ENCODE measurements at regions of chr17 and their contacts with region 1.

Region 1: DNA sequence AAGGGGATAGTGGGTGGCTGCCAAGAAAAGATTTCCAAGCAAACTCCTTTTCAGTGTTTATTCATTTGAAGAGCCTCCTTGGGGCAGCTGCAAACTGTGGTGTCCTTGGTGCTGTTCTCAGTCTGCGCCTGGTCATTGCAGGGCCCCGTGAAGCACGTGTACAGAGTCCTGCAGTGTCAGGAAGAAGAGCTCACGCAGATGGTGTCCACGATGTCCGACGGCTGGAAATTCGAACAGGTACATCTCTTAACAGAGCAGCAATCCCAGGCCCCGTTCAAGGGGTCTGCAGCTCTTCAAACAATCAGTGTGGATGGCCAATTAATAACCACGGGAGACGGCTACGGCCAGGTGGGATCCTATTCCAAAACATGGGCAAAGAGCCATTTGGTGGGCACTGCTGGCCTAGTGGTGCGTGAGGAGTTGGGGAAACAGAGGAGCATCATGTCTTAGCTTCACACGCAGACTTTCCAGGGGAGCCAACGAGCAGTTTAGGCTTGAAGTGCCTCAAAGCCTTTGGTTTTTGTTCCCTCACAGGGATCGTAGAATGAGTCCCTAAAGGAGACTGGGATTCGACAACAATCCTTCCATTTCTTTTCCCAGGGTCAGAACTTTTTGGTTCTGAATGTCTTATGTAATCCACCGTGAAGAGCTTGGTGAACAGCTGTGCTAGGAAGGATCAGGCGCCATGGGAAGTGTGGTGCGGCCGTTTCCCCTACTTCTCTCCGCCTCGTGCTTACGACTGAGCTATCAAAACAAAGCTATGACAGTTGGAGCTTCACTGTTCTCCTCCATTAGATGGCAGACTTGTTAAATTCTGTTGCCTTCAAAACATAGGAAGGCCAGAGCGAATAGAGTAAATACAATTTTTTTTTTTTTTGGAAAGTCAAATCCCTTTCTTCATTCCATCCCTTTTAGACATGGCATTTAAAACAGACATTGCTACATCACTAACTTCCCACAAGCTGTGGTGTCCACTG is 12.6 kb downstream of the KCTD2 start:
- DNase-seq: peak in 1 of 2 experiments; percentile 70
- ATAC-seq: peak; percentile 77 to 85
- H3K4me3 ChIP-seq: no peak overlapping the region
- H3K27ac ChIP-seq: no peak overlapping the region
- H3K4me1 ChIP-seq: no peaks in the 10 kb centered on the region
- CTCF ChIP-seq: peak; percentile 62
- EP300 ChIP-seq: no peak
- POLR2A ChIP-seq: no peak
- RAD21 ChIP-seq: peak; percentile 62 to 71

Region 2: GRCh38 chr17:74852237-74853047 is 207.2 kb before region 1 on chr17:
- CTCF ChIA-PET with region 1: no interaction called
- POLR2A ChIA-PET with region 1: no interaction called
- DNase-seq: no peak
- ATAC-seq: peak; percentile 26 to 45; a peak in 3 of 6 replicates
- H3K4me3 ChIP-seq: peak overlapping the region; percentile 25; the same call in 1 of the 3 replicates
- H3K27ac ChIP-seq: 0 out of 6 replicates have a peak overlapping the region, but pooled peaks of 1 of the 2 experiments have one; percentile 7
- H3K4me1 ChIP-seq: peaks cover 8% of the 10 kb centered on the region; the same call in 1 of the 3 replicates
- CTCF ChIP-seq: no peak
- EP300 ChIP-seq: no peak
- POLR2A ChIP-seq: no peak
- RAD21 ChIP-seq: no peak

Region 3: DNA sequence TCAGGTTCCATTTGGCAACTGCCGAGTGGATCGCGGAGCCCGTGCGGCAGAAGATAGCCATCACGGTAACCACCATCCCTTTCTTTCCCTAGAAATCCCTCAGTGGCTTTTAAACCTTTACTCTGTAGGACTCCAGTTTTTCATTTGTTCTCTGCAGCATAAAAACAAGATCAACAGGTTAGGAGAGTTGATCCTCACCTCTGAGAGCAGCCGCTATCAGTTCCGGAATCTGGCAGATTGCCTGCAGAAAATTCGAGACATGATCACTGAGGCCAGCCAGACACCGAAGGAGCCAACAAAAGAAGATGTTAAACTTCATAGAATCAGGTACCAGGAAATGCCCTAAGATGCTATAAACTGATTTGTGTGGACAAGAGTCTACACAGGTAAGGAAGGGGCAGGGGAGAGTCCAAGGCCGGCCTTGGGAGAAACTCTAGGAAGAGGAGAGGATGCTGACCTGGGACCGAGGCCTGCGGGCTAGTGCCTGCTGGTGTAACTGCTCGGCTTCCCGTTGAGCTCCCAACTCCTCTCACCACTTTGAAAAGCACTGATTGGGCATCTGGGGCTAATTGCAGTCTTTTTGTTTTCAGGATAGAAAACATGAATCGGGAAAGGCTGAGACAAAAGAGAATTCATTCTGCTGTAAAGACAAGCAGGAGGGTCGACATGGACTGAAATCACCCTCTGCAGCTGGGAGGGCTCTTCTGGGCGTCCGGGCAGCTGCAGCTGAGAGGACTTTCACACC is 39.2 kb before region 1 on chr17:
- CTCF ChIA-PET with region 1: no interaction called
- POLR2A ChIA-PET with region 1: no interaction called
- DNase-seq: no peak
- ATAC-seq: no peak
- H3K4me3 ChIP-seq: no peak overlapping the region
- H3K27ac ChIP-seq: no peak overlapping the region
- H3K4me1 ChIP-seq: no peaks in the 10 kb centered on the region
- CTCF ChIP-seq: no peak
- EP300 ChIP-seq: no peak
- POLR2A ChIP-seq: no peak
- RAD21 ChIP-seq: no peak

Region 4: DNA sequence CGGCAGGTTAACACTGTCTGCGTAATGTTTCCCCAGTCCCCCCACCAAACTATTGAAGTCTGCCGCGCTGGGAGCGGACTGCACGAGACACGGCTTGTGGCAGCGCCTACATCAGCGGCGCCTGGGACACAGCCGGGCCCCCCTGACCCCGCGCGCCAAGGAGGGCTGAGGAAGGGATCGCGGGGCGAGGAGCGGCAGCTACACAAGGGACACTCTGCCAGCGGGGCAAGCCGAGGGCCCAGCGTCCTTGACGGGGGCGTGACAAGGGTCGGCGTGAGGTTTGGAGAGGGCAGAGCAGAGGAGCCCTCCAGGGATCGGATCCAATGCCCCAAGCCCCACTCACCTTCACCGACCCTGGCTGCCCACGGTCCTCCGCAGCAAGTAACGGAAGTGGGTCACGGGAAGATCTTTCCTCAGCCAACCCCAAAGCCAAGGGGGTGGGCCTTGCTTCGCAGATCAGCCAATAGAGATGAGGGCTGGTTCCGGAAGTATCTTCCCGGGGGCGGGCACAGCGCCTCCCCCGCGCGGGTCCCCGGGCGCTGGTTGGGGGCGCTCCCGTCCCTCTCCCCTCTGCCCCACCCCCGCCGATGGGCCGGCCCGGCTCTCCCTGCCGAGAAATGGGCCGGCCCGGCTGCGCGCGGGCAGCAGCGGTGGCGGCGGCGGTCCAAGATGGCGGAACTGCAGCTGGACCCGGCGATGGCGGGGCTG is 12.9 kb before region 1 on chr17 and contains the starts of genes ATP5PD and KCTD2:
- CTCF ChIA-PET with region 1: interaction called, 25 read pairs
- POLR2A ChIA-PET with region 1: interaction called, 3 read pairs
- DNase-seq: peak; percentile 98 to 99
- ATAC-seq: peak; percentile 98 to 99
- H3K4me3 ChIP-seq: peak within 1 kb of the TSS; percentile 94
- H3K27ac ChIP-seq: peak within 1 kb of the TSS; percentile 93 to 97
- H3K4me1 ChIP-seq: peaks cover 16% of the 10 kb centered on the region
- CTCF ChIP-seq: no peak
- EP300 ChIP-seq: no peak
- POLR2A ChIP-seq: peak; percentile 90
- RAD21 ChIP-seq: 0 out of 5 replicates have a peak, but pooled peaks of 1 of the 2 experiments have one; percentile 21
- polyA plus RNA-seq, gene ATP5PD: 314 and 333 TPM in 2 replicates
- polyA plus RNA-seq, gene KCTD2: 31.3 and 34.1 TPM in 2 replicates

Region 5: GRCh38 chr17:75087558-75088453 is 28.1 kb after region 1 on chr17 and contains the start of gene SLC16A5:
- CTCF ChIA-PET with region 1: interaction called, 3,429 read pairs
- POLR2A ChIA-PET with region 1: no interaction called
- DNase-seq: peak; percentile 95 to 99
- ATAC-seq: peak; percentile 75 to 82
- H3K4me3 ChIP-seq: peak within 1 kb of the TSS; percentile 67
- H3K27ac ChIP-seq: peak within 1 kb of the TSS; percentile 95 to 96
- H3K4me1 ChIP-seq: peaks cover 77% of the 10 kb centered on the region
- CTCF ChIP-seq: no peak
- EP300 ChIP-seq: no peak
- POLR2A ChIP-seq: peak; percentile 87
- RAD21 ChIP-seq: peak in 1 of 2 experiments; percentile 28; a peak in 1 of 5 replicates
- polyA plus RNA-seq, gene SLC16A5: 19.0 and 20.1 TPM in 2 replicates

Region 6: GRCh38 chr17:75199886-75200618 is 140.4 kb after region 1 on chr17:
- CTCF ChIA-PET with region 1: interaction called, 59 read pairs
- POLR2A ChIA-PET with region 1: interaction called, 4 read pairs
- DNase-seq: no peak
- ATAC-seq: no peak
- H3K4me3 ChIP-seq: no peak overlapping the region
- H3K27ac ChIP-seq: no peak overlapping the region
- H3K4me1 ChIP-seq: peaks cover 4% of the 10 kb centered on the region; the same call in 1 of the 3 replicates
- CTCF ChIP-seq: no peak
- EP300 ChIP-seq: no peak
- POLR2A ChIP-seq: no peak
- RAD21 ChIP-seq: no peak

Region 7: DNA sequence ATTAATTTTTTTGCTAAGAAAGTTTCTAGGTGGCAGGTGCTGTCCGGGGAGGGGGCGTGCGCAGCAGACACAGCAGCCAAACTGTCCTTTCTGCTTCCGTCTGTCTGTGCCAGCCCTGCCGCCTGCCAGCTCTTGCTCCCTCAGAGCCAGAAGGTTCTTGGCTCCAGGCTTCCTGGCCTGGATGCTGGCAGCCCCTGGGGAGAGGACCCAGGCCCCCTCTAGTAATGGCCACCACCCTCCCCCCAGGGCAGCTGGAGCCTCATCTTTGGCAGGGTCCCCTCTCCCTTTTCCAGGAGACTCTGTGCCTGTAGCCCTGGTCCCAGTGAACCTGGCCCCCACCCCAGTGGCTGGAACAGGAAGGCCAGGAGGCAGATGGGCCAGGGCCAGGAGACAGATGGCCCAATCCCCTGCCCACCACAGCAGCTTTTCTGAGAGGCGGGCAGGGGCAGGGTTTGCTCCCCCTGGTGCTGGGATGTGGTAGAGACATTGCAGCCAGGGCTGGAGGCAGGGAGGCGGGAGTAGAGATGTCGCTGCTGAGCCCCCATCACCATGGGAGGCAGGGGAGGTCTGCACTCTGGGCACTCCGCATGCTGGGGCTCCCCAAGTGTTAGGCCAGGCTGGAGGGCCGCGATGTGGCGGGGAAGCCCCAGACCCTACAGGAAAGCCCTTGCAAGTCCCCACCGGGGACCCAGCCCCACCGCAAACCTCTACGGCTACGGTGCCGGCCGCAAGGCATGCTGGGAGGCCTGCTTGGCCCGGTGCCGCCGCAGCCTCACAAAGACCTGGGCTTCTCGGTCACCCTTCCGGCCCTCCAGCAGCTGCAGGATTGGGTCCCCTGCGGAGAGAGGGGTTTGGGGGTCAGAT is 767.8 kb after region 1 on chr17:
- CTCF ChIA-PET with region 1: no interaction called
- POLR2A ChIA-PET with region 1: no interaction called
- DNase-seq: peak; percentile 44 to 92
- ATAC-seq: peak; percentile 73 to 86; a peak in 5 of 6 replicates
- H3K4me3 ChIP-seq: no peak overlapping the region
- H3K27ac ChIP-seq: peak overlapping the region in 1 of 2 experiments; percentile 27; a peak in 2 of 6 replicates
- H3K4me1 ChIP-seq: peaks cover 5% of the 10 kb centered on the region; the same call in 1 of the 3 replicates
- CTCF ChIP-seq: peak; percentile 55
- EP300 ChIP-seq: no peak
- POLR2A ChIP-seq: no peak
- RAD21 ChIP-seq: peak; percentile 40 to 45; a peak in 3 of 5 replicates

Measured in A549 (cell line).